K562 (cell line): ENCODE measurements at regions of chr5 and their contacts with region 1.

Region 1: DNA sequence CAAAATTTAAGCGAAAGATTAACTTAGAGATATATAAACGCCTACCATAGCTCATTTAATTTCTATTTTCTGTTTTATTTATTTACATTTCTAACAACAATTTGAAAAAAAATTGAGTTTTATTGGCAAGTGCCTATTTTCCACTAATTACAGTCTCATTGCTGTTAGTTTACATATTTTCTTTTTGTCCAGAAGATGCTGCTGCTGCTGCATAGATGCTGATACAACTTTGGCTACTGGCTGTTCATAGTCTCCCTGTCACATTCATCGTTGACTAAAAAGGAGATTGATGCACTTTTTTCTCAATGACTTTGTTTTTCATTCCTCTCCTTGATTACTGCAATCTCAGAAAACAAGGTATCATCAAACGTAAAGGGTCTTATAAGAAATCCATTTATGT is 235.4 kb downstream of the CDH9 start:
- DNase-seq: no peak
- ATAC-seq: no peak
- H3K4me3 ChIP-seq: no peak overlapping the region
- H3K27ac ChIP-seq: no peak overlapping the region
- H3K4me1 ChIP-seq: no peaks in the 10 kb centered on the region
- H3K27me3 ChIP-seq: no peaks in the 10 kb centered on the region
- CTCF ChIP-seq: no peak
- EP300 ChIP-seq: no peak
- POLR2A ChIP-seq: no peak
- RAD21 ChIP-seq: no peak

Region 2: GRCh38 chr5:26326153-26326759 is 476.7 kb before region 1 on chr5:
- CTCF ChIA-PET with region 1: no interaction called
- POLR2A ChIA-PET with region 1: no interaction called
- in situ Hi-C with region 1: no loop called
- intact Hi-C with region 1: no loop called
- DNase-seq: no peak
- ATAC-seq: no peak
- H3K4me3 ChIP-seq: no peak overlapping the region
- H3K27ac ChIP-seq: no peak overlapping the region
- H3K4me1 ChIP-seq: no peaks in the 10 kb centered on the region
- H3K27me3 ChIP-seq: no peaks in the 10 kb centered on the region
- CTCF ChIP-seq: no peak
- EP300 ChIP-seq: no peak
- POLR2A ChIP-seq: no peak
- RAD21 ChIP-seq: no peak

Region 3: DNA sequence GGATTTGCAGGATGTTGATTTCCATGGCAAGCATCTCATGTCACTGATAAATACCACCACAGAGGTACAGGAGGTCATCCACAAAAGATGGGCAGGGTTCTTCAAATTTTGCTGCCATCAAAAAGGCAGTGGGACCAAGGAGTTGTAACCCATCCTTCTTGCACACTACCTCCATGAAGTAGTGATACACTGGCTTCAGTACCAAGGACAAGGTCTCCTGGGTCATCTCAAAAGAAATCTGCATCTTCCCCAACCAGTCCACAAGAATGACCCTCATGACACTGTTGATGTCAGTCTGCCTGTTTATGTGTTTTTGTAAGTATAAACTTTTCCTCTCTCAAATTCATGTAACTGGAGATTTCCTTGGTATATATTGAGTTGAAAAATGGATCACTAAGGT is 62.8 kb before region 1 on chr5:
- CTCF ChIA-PET with region 1: no interaction called
- POLR2A ChIA-PET with region 1: no interaction called
- in situ Hi-C with region 1: no loop called
- intact Hi-C with region 1: no loop called
- DNase-seq: no peak
- ATAC-seq: no peak
- H3K4me3 ChIP-seq: no peak overlapping the region
- H3K27ac ChIP-seq: no peak overlapping the region
- H3K4me1 ChIP-seq: no peaks in the 10 kb centered on the region
- H3K27me3 ChIP-seq: no peaks in the 10 kb centered on the region
- CTCF ChIP-seq: no peak
- EP300 ChIP-seq: no peak
- POLR2A ChIP-seq: no peak
- RAD21 ChIP-seq: no peak

Region 4: GRCh38 chr5:26791433-26791832 is 11.5 kb before region 1 on chr5:
- CTCF ChIA-PET with region 1: no interaction called
- POLR2A ChIA-PET with region 1: no interaction called
- in situ Hi-C with region 1: no loop called
- intact Hi-C with region 1: loop called (anchors 1 kb)
- DNase-seq: no peak
- ATAC-seq: no peak
- H3K4me3 ChIP-seq: no peak overlapping the region
- H3K27ac ChIP-seq: no peak overlapping the region
- H3K4me1 ChIP-seq: no peaks in the 10 kb centered on the region
- H3K27me3 ChIP-seq: no peaks in the 10 kb centered on the region
- CTCF ChIP-seq: no peak
- EP300 ChIP-seq: no peak
- POLR2A ChIP-seq: no peak
- RAD21 ChIP-seq: no peak

Region 5: GRCh38 chr5:27257696-27258095 is 454.8 kb after region 1 on chr5:
- CTCF ChIA-PET with region 1: no interaction called
- POLR2A ChIA-PET with region 1: no interaction called
- in situ Hi-C with region 1: no loop called
- intact Hi-C with region 1: no loop called
- DNase-seq: no peak
- ATAC-seq: no peak
- H3K4me3 ChIP-seq: no peak overlapping the region
- H3K27ac ChIP-seq: no peak overlapping the region
- H3K4me1 ChIP-seq: no peaks in the 10 kb centered on the region
- H3K27me3 ChIP-seq: no peaks in the 10 kb centered on the region
- CTCF ChIP-seq: no peak
- EP300 ChIP-seq: no peak
- POLR2A ChIP-seq: no peak
- RAD21 ChIP-seq: no peak

Region 6: DNA sequence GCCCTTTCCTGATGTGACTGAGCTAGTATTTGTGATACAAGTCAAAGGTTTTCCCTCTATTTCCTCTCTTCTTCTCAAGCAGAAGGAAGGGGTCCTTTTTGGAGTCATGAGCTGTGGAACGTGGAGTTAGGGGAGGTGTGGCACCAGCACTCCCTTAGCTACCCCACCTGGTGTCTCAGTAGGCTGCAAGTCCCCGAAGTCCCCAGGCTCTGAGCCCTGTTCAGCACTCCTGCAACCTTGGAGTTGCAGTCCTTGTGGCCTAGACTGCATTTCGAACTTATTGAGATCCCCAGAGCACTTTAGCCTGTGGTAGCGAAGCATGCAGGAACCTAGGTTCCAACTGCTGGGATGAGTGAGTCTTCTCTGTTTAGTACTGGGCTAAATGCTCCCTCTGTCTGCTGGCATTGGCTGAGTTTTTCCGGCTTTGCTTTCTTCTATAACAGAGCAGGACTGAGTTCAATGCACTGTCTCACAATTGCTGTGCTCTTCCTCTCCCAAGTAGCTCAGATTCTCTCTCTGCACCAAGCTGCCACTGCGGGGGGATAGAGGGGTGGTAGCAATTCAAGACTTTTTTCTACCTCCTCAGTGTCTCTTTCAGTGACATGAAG is 836.2 kb after region 1 on chr5:
- CTCF ChIA-PET with region 1: no interaction called
- POLR2A ChIA-PET with region 1: no interaction called
- in situ Hi-C with region 1: no loop called
- intact Hi-C with region 1: no loop called
- DNase-seq: no peak
- ATAC-seq: no peak
- H3K4me3 ChIP-seq: no peak overlapping the region
- H3K27ac ChIP-seq: no peak overlapping the region
- H3K4me1 ChIP-seq: no peaks in the 10 kb centered on the region
- H3K27me3 ChIP-seq: no peaks in the 10 kb centered on the region
- CTCF ChIP-seq: no peak
- EP300 ChIP-seq: no peak
- POLR2A ChIP-seq: no peak
- RAD21 ChIP-seq: no peak